RWPE1 (cell line): ENCODE measurements at regions of chr15 and their contacts with region 1.

Region 1: DNA sequence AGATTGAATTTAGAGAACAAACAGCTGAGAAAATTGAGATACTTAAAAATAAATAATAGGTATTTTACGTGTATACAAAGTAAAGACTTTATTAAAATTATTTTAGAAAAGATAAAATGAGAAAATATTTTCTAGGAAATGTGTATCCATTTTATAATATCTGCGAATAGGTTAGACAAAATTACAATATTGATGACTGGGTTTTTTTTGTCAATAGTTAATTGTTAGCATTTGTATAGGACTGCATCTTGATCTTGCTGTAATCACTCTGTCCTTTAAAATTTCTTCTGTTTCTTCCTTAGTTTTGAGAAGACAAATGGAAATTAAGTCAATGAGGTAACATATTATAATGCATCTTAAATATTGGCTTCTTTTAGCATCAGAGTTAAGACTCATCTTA is 50.3 kb downstream of the MEF2A start:
- DNase-seq: no peak
- H3K27ac ChIP-seq: no peak overlapping the region
- CTCF ChIP-seq: no peak

Region 2: DNA sequence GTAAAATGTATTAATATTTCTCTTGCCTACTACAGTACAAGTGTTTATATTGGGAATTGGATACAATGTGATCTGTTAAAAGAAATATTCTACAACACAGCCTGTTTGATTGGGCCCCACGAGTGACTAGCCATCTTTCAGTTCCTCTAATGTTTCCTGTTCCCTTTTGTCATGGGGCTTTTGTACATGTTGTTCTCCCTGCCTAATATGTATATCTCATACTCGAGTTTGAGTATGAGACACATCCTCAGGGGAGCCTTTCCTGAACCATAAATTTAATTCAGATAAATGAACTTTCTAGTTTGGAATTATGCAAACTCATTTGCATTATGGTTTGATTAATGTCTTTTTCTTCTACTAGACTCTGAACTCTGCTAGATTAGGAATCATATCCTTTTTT is 15.1 kb after region 1 on chr15:
- CTCF ChIA-PET with region 1: interaction called, 10 read pairs
- POLR2A ChIA-PET with region 1: no interaction called
- DNase-seq: no peak
- H3K27ac ChIP-seq: no peak overlapping the region
- CTCF ChIP-seq: no peak

Region 3: GRCh38 chr15:99711625-99712024 is 95.5 kb after region 1 on chr15:
- CTCF ChIA-PET with region 1: no interaction called
- POLR2A ChIA-PET with region 1: no interaction called
- DNase-seq: no peak
- H3K27ac ChIP-seq: peak overlapping the region; percentile 46
- CTCF ChIP-seq: no peak

Region 4: GRCh38 chr15:100500226-100500990 is 884.3 kb after region 1 on chr15:
- CTCF ChIA-PET with region 1: no interaction called
- POLR2A ChIA-PET with region 1: no interaction called
- DNase-seq: no peak
- H3K27ac ChIP-seq: no peak overlapping the region
- CTCF ChIP-seq: no peak